Aorta (tissue), 5 donors: ENCODE measurements at regions of chr13 and their contacts with region 1.

Region 1: GRCh38 chr13:48580185-48580803 is 47.4 kb upstream of the RCBTB2 start:
- DNase-seq: peak in 1 of 2 donors; percentile 71
- ATAC-seq: peak; percentile 56
- H3K4me3 ChIP-seq: no peak overlapping the region
- H3K27ac ChIP-seq: no peak overlapping the region
- H3K4me1 ChIP-seq: peaks cover 0 to 3% of the 10 kb centered on the region in 2 donors
- H3K27me3 ChIP-seq: no peaks in the 10 kb centered on the region

Region 2: DNA sequence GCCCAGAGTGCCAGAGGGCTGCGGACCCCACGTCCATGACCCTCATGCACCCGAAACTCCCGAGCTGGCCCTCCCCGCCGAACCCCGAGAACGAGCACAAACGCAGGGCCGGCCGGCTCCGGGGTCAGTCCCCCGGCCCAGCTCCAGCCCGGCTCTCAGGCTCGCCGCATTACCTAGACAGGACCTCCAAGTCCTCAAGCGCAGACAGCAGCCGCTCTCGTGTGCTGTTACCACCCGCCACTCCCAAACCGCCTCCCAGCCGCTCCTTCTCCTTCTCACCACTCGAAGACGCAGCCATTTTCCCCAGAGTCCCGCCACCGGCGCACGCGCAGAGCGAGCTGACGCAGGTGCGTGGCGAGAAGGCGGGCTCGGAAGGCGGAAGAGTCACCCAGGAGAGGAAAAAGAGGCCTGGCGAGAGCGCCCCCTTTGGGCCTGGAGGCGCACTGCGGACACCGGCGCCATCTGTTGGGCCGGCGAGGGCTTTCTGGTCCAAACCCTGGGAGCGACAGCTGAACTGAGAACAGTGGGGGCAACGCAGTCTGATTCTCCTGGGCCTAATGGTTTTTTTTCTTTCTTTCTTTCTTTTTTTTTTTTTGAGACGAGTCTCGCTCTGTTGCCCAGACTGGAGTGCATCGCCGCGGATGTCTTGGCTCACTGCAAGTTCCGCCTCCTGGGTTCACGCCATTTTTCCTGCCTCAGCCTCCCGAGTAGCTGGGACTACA is 485.4 kb before region 1 on chr13 and contains the start of gene MED4:
- intact Hi-C with region 1: loop called in 1 of 2 experiments (anchors 5 kb)
- DNase-seq: peak; percentile 96 to 99
- ATAC-seq: peak; percentile 98
- H3K4me3 ChIP-seq: peak within 1 kb of the TSS; percentile 75 to 95
- H3K27ac ChIP-seq: peak within 1 kb of the TSS; percentile 30 to 38
- H3K4me1 ChIP-seq: no peaks in the 10 kb centered on the region
- H3K27me3 ChIP-seq: no peaks in the 10 kb centered on the region
- total RNA-seq, gene MED4: 46.1 to 46.9 TPM

Region 3: GRCh38 chr13:48126944-48127830 is 453.1 kb before region 1 on chr13:
- intact Hi-C with region 1: loop called in 1 of 2 experiments (anchors 10 kb)
- DNase-seq: peak; percentile 74 to 81
- ATAC-seq: peak; percentile 91
- H3K4me3 ChIP-seq: no peak overlapping the region
- H3K27ac ChIP-seq: peak overlapping the region; percentile 90 to 97
- H3K4me1 ChIP-seq: peaks cover 3 to 5% of the 10 kb centered on the region in 2 donors
- H3K27me3 ChIP-seq: no peaks in the 10 kb centered on the region

Region 4: DNA sequence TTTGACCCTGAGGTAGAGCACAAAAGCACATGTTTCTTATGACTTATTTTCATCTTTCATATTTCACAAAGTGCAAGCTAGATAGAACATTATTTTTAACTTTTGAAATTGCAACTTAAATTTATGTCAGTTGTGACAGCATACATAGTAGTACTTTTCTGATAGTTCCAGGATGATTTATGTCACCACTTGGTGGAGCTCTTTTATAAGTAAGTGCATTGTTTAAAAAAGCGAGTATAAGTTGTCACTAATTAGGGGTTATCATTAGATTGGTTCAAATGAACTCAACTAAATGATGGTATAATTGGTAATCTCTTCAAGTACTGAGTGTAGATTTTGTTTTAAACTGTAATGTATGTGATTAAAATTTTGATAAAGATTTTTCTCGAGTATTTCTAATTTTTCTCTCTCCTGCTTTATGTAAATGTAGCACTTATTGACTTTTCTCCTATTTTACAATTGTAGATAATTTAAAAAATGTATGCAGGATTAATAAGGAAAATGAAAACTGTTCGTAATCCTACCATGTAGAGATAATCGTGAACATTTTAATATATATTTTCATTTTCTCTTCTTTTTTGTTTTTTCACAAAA is 245.7 kb before region 1 on chr13:
- intact Hi-C with region 1: loop called (anchors 2 to 5 kb)
- DNase-seq: no peak
- ATAC-seq: no peak
- H3K4me3 ChIP-seq: no peak overlapping the region
- H3K27ac ChIP-seq: no peak overlapping the region
- H3K4me1 ChIP-seq: no peaks in the 10 kb centered on the region
- H3K27me3 ChIP-seq: no peaks in the 10 kb centered on the region

Region 5: GRCh38 chr13:48532506-48533499 is 47.5 kb before region 1 on chr13 and contains the start of gene RCBTB2:
- intact Hi-C with region 1: loop called in 1 of 2 experiments (anchors 5 kb)
- DNase-seq: peak; percentile 100
- ATAC-seq: peak; percentile 99
- H3K4me3 ChIP-seq: peak within 1 kb of the TSS; percentile 55 to 69
- H3K27ac ChIP-seq: peak within 1 kb of the TSS; percentile 68 to 96
- H3K4me1 ChIP-seq: peaks cover 0 to 5% of the 10 kb centered on the region in 2 donors
- H3K27me3 ChIP-seq: no peaks in the 10 kb centered on the region
- total RNA-seq, gene RCBTB2: 12.6 to 25.7 TPM